ENCODE measurements at regions of chr3 and their contacts with region 1.

Region 1: GRCh38 chr3:16928386-16929132 is 43.8 kb downstream of the PLCL2 start:
- DNase-seq: peak in 2 of 3 donors; percentile 50 to 55
- H3K4me3 ChIP-seq: no peak overlapping the region
- H3K27ac ChIP-seq: no peak overlapping the region
- H3K4me1 ChIP-seq: peaks cover 4 to 40% (median 16%) of the 10 kb centered on the region in 4 experiments
- H3K27me3 ChIP-seq: no peaks in the 10 kb centered on the region

Region 2: DNA sequence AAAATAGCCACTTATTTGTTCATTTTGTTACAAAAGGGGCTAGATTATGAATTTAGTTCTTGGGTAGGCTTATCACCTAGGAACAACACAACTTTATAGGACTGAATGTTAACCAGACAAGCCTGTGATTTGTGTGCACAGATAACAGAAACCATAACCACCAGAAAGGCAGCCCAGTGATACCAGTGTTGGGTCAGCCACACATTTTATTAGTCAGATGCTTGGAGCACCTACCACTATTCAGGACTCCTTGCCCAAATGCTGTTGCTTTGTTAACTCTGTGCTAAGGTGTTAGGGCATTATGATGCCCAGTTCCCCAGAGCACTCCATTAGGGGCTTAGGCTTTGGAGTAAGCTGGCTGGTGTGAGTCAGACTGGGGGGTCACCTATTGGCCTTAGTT is 21.3 kb before region 1 on chr3:
- CTCF ChIA-PET with region 1: interaction called, 12 read pairs
- POLR2A ChIA-PET with region 1: interaction called, 3 read pairs
- DNase-seq: peak; percentile 35 to 68 (median 50)
- H3K4me3 ChIP-seq: peak overlapping the region in 3 of 7 experiments; percentile 12 to 55 (median 33)
- H3K27ac ChIP-seq: peak overlapping the region in 1 of 2 experiments; percentile 63
- H3K4me1 ChIP-seq: peaks cover 15 to 47% (median 20%) of the 10 kb centered on the region in 4 experiments
- H3K27me3 ChIP-seq: no peaks in the 10 kb centered on the region

Region 3: GRCh38 chr3:16917256-16917935 is 11.2 kb before region 1 on chr3:
- CTCF ChIA-PET with region 1: interaction called, 17 read pairs
- POLR2A ChIA-PET with region 1: interaction called, 3 read pairs
- DNase-seq: no peak
- H3K4me3 ChIP-seq: peak overlapping the region in 1 of 7 experiments; percentile 2
- H3K27ac ChIP-seq: peak overlapping the region in 1 of 2 experiments; percentile 51
- H3K4me1 ChIP-seq: peaks cover 9 to 53% (median 21%) of the 10 kb centered on the region in 4 experiments
- H3K27me3 ChIP-seq: no peaks in the 10 kb centered on the region

Region 4: DNA sequence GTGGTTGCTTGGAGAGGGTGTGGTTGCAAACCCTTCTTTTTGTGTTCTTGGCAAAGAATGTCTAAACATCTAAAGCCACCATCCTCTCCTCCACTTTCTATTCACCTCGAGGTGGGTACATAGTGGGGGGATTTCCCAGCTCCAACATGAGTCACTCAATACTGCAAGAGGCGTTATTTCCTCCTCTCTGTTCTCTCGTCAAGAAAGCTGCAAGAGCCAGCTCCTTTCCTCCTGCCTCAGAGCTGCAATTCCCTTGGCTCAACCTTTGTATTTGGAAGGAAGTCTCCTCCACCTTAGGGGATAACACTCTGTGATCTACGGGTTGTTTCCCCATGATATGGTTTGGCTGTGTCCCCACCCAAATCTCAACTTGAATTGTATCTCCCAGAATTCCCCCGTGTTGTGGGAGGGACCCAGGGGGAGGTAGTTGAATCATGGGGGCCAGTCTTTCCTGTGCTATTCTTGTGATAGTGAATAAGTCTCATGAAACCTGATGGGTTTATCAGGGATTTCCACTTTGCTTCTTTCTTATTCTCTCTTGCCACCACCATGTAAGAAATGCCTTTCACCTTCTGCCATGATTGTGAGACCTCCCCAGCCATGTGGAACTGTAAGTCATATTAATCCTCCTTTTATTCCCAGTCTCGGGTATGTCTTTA is 94.6 kb after region 1 on chr3:
- CTCF ChIA-PET with region 1: no interaction called
- POLR2A ChIA-PET with region 1: no interaction called
- DNase-seq: peak in 2 of 3 donors; percentile 64
- H3K4me3 ChIP-seq: no peak overlapping the region
- H3K27ac ChIP-seq: no peak overlapping the region
- H3K4me1 ChIP-seq: no peaks in the 10 kb centered on the region
- H3K27me3 ChIP-seq: no peaks in the 10 kb centered on the region